CD8-positive, alpha-beta memory T cell (primary cell): ENCODE measurements at regions of chr10 and their contacts with region 1.

Region 1: DNA sequence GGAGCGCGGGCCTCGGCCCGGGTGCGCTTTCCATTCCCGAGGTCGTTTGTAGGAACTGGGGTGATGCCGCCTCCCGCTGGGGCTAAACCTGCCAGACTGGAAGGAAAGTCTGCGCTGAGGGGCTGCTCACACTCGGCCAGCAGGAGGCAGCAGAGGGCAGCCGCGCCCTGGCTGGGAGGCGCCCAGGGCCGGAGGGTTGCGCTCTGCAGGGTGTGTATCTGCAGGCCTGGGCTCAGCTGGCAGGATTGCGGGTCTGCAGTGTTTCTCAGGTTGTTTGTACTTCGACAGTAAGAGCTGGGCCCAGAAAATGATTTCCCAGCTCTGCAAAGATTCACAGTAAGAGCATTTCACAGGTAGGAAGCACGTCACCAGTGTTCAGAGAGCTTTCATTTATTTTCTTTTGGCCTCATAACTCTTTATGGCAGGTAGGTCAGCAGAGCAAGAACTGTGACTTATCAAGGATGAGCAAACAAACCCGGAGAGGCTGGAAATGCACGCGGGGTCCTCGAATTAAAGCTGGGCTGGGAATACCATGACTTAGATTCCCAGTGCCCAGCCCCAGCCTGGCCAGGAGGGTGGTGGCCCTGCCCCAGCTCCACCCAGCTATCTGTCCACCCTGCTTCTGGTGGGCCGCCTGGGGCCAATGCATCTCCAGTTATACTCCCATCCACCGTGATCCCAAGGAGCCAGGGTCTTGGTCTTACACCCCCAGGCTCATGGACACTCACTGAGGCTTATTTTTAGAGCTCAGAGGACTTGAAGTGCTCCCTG is 15.2 kb upstream of the PPP2R2D start:
- DNase-seq: peak; percentile 70 to 84 (median 78)
- H3K4me3 ChIP-seq: no peak overlapping the region
- H3K4me3 Mint-ChIP-seq: peak overlapping the region in 1 of 7 donors; percentile 42
- H3K27ac ChIP-seq: no peak overlapping the region
- H3K27ac Mint-ChIP-seq: peak overlapping the region in 1 of 8 donors; percentile 31
- H3K4me1 ChIP-seq: peaks cover 3% of the 10 kb centered on the region
- H3K4me1 Mint-ChIP-seq: peaks cover 1 to 4% (median 4%) of the 10 kb centered on the region in 3 donors
- H3K27me3 ChIP-seq: no peaks in the 10 kb centered on the region
- H3K27me3 Mint-ChIP-seq: peaks cover 0 to 27% of the 10 kb centered on the region in 2 donors

Region 2: DNA sequence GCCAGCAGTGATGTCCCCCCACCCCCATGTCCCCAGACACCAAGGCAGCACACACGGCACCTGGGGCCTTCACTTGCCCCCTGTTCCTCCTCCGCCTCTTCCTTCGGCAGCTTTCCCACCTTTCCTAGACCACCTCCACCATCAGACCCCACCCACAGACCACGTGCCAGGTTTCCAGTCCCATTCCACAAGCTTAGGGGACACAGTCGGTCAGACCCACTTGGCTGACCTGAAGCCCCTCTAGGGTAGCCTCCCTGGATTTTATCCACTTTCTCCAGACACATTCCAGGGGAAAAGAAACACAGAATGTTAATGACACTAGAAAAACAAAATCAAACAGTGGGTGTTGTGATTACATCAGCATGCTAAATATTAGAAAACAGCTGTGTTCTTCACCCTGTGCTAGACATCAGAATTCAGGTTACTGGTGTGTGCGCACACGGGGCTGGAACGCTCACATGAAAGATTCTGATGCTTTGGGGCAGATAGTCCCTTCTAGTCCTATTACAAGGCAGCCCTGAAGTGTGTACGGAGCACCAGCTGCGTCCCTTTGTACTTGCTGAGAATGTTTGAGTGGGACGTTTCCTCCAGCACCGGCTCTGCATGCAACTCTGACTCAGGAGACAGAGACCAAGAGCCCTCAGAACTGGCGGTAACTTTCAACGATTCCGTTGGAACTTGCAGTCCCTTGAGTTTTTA is 60.3 kb before region 1 on chr10:
- CTCF ChIA-PET with region 1: no interaction called
- POLR2A ChIA-PET with region 1: no interaction called
- DNase-seq: no peak
- H3K4me3 ChIP-seq: no peak overlapping the region
- H3K4me3 Mint-ChIP-seq: no peak overlapping the region
- H3K27ac ChIP-seq: no peak overlapping the region
- H3K27ac Mint-ChIP-seq: peak overlapping the region in 1 of 8 donors; percentile 50
- H3K4me1 ChIP-seq: no peaks in the 10 kb centered on the region
- H3K4me1 Mint-ChIP-seq: no peaks in the 10 kb centered on the region
- H3K27me3 ChIP-seq: no peaks in the 10 kb centered on the region
- H3K27me3 Mint-ChIP-seq: peaks cover 4 to 6% of the 10 kb centered on the region in 2 donors

Region 3: DNA sequence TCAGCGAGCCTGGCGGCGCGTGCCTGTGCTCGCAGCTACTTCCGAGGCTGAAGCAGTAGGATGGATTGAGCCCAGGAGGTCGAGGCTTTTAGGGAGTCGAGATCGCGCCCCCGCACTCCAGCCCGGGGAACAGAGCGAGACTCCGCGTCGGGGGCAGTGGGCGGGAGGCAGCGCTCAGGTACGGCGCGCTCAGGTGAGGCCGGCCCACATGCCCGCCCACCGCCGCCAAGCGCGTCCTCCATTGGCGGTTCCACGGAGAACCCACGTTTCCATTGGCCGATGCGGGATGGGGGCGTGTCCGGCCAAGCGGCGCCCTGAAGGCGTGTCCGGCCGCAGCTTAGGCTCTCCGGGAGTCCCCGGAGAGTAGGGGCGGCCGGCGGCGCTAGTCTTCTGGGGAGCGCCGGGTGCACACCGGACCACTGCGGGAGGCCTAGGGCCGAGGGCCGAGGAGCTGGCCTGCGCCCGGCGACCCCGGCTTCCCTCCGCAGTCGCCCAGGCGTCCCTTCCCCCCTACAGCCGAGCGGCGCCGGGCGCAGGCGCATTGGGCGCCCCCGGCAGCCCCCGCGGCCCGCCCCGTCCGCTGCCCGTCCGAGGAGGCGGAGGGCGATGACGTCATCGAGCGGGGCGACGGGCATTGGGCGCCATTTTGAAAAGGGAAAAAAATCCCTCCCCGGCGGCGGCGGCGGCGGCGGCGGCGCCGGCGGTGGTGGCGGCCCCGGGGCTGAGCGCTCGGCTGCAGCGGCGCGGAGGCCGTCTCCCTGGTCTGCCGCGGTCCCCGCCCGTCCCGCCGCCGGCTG is 15.0 kb after region 1 on chr10 and contains the start of gene PPP2R2D:
- CTCF ChIA-PET with region 1: interaction called, 19 read pairs
- POLR2A ChIA-PET with region 1: no interaction called
- DNase-seq: peak; percentile 93 to 99 (median 97)
- H3K4me3 ChIP-seq: peak within 1 kb of the TSS; percentile 83
- H3K4me3 Mint-ChIP-seq: peak within 1 kb of the TSS; percentile 85 to 96 (median 90)
- H3K27ac ChIP-seq: peak within 1 kb of the TSS; percentile 76
- H3K27ac Mint-ChIP-seq: peak within 1 kb of the TSS; percentile 80 to 98 (median 94)
- H3K4me1 ChIP-seq: peaks cover 64% of the 10 kb centered on the region
- H3K4me1 Mint-ChIP-seq: peaks cover 55 to 71% (median 62%) of the 10 kb centered on the region in 3 donors
- H3K27me3 ChIP-seq: no peaks in the 10 kb centered on the region
- H3K27me3 Mint-ChIP-seq: peaks cover 1 to 10% of the 10 kb centered on the region in 2 donors
- total RNA-seq, gene PPP2R2D: 23.5 to 24.5 TPM

Region 4: DNA sequence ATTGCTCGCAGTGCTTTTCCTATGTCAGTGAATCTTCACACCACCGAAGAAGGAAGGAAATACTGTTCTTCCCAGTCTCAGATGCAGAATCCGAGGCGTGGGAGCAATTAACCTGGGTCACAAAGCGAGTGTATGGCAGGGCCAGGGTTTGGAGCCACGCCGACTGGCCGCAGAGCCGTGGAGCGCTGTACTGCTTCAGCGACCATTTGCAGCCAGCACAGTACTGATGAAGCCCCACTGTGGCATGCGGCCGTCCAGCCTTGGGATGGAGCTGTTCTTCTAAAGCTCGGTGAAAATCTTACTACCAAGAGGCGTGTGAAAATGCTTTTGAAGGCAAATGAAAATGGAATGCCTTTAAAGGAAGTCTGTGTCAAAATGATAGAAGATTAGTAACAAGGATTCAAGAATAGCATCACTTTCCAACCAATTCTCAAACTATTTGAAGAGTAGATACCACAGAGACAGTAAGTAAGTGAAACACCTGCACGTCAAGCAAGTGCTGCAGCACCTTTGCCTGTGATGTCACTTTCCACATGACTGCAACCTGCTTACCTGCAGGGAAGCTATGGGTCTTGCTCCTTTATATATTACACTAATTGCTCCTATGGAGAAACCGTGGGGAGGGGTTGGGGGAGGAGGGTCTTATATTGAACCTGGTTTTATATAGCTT is 20.2 kb after region 1 on chr10:
- CTCF ChIA-PET with region 1: interaction called, 13 read pairs
- POLR2A ChIA-PET with region 1: no interaction called
- DNase-seq: peak in 1 of 5 donors; percentile 33
- H3K4me3 ChIP-seq: peak overlapping the region; percentile 30
- H3K4me3 Mint-ChIP-seq: peak overlapping the region; percentile 9 to 89 (median 41)
- H3K27ac ChIP-seq: no peak overlapping the region
- H3K27ac Mint-ChIP-seq: peak overlapping the region; percentile 32 to 98 (median 94)
- H3K4me1 ChIP-seq: peaks cover 87% of the 10 kb centered on the region
- H3K4me1 Mint-ChIP-seq: peaks cover 64 to 79% (median 77%) of the 10 kb centered on the region in 3 donors
- H3K27me3 ChIP-seq: no peaks in the 10 kb centered on the region
- H3K27me3 Mint-ChIP-seq: no peaks in the 10 kb centered on the region

Region 5: DNA sequence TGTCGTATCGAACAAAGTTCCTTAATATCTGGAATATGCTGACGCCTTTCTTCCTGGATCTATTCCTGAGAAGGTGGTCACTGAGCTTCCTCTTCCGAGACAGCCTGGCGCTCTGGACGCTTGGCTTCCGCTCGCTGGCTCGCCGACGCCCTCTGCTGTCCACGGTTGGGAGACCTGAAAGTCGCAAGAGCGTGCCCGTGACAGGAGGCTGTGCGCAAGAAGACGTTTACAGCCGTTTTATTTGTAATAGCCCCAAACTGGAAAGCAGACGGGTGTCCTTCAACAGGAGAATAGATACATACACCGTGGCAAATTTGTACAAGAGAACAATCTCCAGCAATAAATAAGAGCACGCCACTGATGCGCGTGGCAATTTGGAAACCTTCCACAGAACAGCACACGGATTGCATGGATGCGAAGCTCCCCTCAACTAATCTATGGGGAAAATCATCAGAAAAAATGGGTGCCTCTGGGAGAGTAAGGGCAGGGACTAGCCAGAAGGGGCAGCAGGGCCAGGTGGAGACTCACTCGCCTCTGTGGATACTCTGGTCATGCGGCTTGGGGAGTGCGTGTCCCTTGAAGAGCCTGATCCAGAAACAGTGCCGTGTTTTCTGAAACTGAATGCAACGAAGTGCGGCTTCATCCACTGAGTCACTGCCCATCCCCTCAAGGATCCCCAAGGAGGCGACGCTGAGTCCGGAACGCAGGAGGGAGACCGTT is 137.7 kb after region 1 on chr10:
- CTCF ChIA-PET with region 1: interaction called, 79 read pairs
- POLR2A ChIA-PET with region 1: interaction called, 3 read pairs
- DNase-seq: peak; percentile 54 to 79 (median 62)
- H3K4me3 ChIP-seq: no peak overlapping the region
- H3K4me3 Mint-ChIP-seq: peak overlapping the region in 4 of 7 donors; percentile 13 to 55 (median 48)
- H3K27ac ChIP-seq: no peak overlapping the region
- H3K27ac Mint-ChIP-seq: peak overlapping the region in 1 of 8 donors; percentile 12
- H3K4me1 ChIP-seq: peaks cover 7% of the 10 kb centered on the region
- H3K4me1 Mint-ChIP-seq: peaks cover 6 to 11% (median 8%) of the 10 kb centered on the region in 3 donors
- H3K27me3 ChIP-seq: no peaks in the 10 kb centered on the region
- H3K27me3 Mint-ChIP-seq: peaks cover 15 to 31% of the 10 kb centered on the region in 2 donors